WTC11 (cell line): ENCODE measurements at regions of chr1 and their contacts with region 1.

Region 1: DNA sequence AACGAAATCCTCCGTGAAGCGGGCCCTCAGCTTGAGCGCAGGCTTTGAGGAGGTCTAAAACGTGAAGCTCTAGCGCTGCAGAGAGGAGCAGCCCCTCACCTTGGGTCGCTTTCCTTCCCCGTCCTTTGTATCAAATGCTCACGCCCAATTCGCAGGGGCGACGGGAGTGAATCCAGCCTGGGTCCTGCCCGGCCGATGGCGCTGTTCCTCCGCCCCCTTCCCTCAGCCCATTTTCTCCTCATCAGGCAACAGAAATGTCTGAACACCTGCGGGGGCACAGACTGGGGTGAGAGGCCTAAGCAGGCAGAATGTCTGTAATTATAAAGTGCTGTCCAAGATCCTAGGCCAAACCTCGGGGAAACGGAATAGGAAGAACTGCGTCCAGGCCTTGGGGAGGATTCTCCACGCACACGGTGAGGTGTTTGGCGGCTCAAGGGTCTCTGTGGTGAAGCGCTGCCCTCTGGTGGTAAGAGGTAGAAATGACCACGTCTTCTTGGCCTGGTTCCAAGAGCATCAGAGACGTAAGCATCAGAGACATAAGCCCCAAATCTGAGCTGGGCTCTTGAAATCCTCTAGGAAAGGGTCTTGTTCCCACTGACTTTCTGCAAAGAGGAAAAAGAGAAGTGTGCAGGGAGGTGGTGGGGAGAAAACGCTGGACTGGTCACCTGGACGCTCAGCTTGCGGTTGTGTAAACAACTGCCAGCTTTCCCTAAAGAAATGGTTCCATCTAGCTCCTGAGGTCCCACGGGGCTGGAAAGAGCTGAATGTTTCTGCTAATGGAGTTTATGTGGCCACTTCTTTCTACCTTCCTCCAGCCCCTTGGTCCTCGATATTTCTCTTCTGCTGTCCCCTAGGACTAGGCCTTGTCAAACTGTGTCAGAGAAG is 92.1 kb upstream of the CD53 start:
- DNase-seq: peak; percentile 79
- ATAC-seq: peak; percentile 87
- H3K4me3 Mint-ChIP-seq: peak overlapping the region; percentile 74
- H3K27ac Mint-ChIP-seq: no peak overlapping the region
- H3K4me1 Mint-ChIP-seq: peaks cover 11% of the 10 kb centered on the region
- H3K27me3 Mint-ChIP-seq: peaks cover 39% of the 10 kb centered on the region
- CTCF ChIP-seq: peak; percentile 91

Region 2: DNA sequence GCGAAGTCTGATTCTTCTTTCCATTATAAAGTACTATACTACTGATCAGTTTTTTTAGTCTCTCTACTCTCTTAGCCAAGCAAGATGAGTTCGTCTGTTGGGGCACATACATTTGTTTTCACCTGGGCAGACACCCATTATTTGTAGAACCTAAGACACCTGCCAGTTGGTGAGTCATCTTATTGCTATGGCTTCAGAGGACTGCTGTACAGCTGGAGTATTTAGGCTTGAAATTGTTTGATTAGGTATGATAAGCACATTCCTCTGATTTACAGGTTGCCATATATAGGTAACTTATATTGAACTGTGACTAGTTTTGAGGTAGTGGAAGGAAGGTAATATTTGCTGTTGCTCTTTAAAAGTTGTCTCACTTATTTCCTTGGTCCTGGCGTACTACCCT is 424.4 kb before region 1 on chr1:
- CTCF ChIA-PET with region 1: no interaction called
- POLR2A ChIA-PET with region 1: no interaction called
- DNase-seq: no peak
- ATAC-seq: no peak
- H3K4me3 Mint-ChIP-seq: no peak overlapping the region
- H3K27ac Mint-ChIP-seq: no peak overlapping the region
- H3K4me1 Mint-ChIP-seq: no peaks in the 10 kb centered on the region
- H3K27me3 Mint-ChIP-seq: no peaks in the 10 kb centered on the region
- CTCF ChIP-seq: no peak

Region 3: GRCh38 chr1:110524311-110525251 is 256.3 kb before region 1 on chr1:
- CTCF ChIA-PET with region 1: interaction called, 66 read pairs
- POLR2A ChIA-PET with region 1: no interaction called
- DNase-seq: peak; percentile 81
- ATAC-seq: peak; percentile 96
- H3K4me3 Mint-ChIP-seq: no peak overlapping the region
- H3K27ac Mint-ChIP-seq: no peak overlapping the region
- H3K4me1 Mint-ChIP-seq: no peaks in the 10 kb centered on the region
- H3K27me3 Mint-ChIP-seq: peaks cover 4% of the 10 kb centered on the region
- CTCF ChIP-seq: peak; percentile 88

Region 4: DNA sequence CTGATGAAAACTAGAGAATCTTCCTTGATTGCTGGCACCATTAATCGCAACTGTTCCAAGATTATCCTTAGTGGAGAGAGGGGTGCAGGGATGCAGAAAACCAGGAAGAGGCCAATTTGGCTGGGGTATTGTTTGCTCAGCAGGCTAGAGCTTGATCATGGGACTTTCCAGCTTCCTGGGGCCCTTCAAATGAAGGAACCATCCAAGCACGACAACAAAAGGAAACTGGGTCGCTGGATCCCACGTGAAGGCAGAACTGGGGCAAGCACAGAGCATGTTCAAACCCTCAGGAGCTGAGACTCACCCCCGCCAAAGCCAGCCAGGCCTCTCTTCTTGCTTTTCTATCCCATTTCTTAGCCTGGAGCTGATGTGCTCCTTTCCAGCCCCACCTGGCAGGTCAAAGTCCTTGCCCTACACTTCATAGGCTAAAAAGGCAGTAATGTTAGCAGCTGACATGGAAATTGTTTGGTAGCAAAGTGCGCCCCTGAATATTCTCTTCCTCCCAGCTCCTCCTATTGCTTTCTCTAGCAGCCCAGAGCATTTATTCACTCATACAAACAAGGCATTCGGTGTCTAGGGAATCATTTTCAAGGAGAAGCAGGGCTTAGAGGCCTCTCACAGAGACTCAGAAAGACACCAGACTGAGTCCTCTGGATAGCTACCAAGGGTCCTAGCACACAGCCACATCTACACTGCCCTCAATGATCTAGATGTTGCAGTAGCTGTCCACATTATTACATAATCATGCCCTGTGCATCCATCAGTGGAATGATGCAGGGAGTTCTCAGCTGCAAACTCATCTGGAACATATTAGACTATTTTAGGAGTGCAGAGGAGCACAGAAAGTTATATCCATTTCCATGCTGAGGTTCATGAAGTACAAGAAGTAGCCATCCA is 186.1 kb before region 1 on chr1:
- CTCF ChIA-PET with region 1: no interaction called
- POLR2A ChIA-PET with region 1: no interaction called
- DNase-seq: no peak
- ATAC-seq: no peak
- H3K4me3 Mint-ChIP-seq: no peak overlapping the region
- H3K27ac Mint-ChIP-seq: no peak overlapping the region
- H3K4me1 Mint-ChIP-seq: no peaks in the 10 kb centered on the region
- H3K27me3 Mint-ChIP-seq: peaks cover 18% of the 10 kb centered on the region
- CTCF ChIP-seq: no peak

Region 5: DNA sequence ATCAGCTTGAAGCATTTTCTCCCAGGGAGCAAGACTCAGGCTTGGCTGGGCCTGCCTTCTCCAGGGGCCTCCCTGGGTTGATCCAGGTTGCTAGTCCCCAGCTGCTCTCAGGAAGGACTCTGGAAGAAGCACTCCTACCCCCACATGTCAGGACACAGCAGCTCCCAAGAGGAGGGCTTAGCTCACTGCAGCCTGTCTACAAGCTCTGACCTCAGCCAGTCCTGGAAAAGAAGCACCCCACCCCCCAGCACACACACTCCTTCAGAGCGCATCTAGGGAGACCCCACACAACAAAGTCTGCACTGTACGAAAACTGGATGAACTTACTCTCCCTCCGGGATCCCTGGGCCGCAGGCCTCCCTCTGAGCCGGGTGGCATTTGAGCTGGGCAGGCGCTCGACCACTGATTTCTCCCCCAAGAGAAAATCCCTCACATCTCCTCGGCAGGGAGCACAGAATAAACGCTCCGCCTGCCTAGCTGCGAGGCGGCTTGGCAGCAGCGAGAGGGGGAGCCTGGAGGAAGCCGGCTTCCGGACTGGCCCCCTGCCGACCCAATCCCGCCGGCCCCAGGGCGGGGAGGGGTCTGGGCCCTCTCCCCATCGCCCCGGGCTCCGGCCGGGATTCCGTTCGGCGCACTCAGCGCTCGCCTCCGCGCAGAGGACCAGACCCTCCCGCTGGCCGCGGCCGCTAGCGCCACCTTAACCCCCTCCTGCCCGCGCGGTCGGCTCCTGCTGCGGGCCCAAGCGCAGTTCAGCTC is 174.8 kb before region 1 on chr1 and contains the start of gene KCNA2:
- CTCF ChIA-PET with region 1: interaction called, 31 read pairs
- POLR2A ChIA-PET with region 1: no interaction called
- DNase-seq: peak; percentile 68
- ATAC-seq: peak; percentile 71
- H3K4me3 Mint-ChIP-seq: peak within 1 kb of the TSS; percentile 79
- H3K27ac Mint-ChIP-seq: no peak within 1 kb of the TSS
- H3K4me1 Mint-ChIP-seq: peaks cover 15% of the 10 kb centered on the region
- H3K27me3 Mint-ChIP-seq: peaks cover 79% of the 10 kb centered on the region
- CTCF ChIP-seq: no peak
- total RNA-seq, gene KCNA2: 0.41 to 0.87 TPM (median 0.50 TPM) in 3 replicates

Region 6: GRCh38 chr1:110630839-110631663 is 149.8 kb before region 1 on chr1:
- CTCF ChIA-PET with region 1: interaction called, 58 read pairs
- POLR2A ChIA-PET with region 1: no interaction called
- DNase-seq: peak; percentile 87
- ATAC-seq: peak; percentile 100
- H3K4me3 Mint-ChIP-seq: no peak overlapping the region
- H3K27ac Mint-ChIP-seq: no peak overlapping the region
- H3K4me1 Mint-ChIP-seq: no peaks in the 10 kb centered on the region
- H3K27me3 Mint-ChIP-seq: peaks cover 4% of the 10 kb centered on the region; the same call in 1 of the 2 replicates
- CTCF ChIP-seq: peak; percentile 82

Region 7: DNA sequence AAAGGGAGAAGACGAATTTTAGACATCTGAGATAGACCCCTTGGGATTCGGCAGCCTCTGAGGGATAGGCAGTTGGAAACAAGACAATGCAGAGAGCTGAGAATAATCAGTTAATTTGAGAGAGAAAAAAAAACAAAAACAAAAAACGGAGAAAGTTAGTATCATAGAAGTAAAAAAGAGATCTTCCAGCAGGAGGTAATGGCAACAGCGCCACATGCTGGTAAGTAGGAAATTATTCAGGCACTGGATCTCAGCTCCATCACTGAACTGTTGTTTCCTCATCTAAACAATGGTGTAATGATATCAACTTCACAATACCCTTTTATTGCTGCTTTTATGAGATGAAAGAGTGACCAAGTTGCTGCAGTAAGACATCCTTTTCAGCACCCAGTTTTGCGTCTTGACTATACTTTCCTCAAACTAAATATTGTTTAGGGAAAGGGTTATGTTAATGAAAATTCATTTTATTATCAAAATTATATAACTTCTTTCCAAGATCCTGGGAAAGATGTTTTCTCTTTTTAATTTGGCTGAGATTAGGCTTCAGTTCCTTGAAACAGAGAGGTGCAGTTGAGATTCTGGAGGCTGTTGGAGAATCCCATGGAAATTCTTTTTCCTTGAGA is 14.7 kb before region 1 on chr1:
- CTCF ChIA-PET with region 1: interaction called, 87 read pairs
- POLR2A ChIA-PET with region 1: no interaction called
- DNase-seq: no peak
- ATAC-seq: peak; percentile 26; the same call in 1 of the 2 replicates
- H3K4me3 Mint-ChIP-seq: peak overlapping the region; percentile 14; the same call in 1 of the 2 replicates
- H3K27ac Mint-ChIP-seq: no peak overlapping the region
- H3K4me1 Mint-ChIP-seq: peaks cover 3% of the 10 kb centered on the region; the same call in 1 of the 2 replicates
- H3K27me3 Mint-ChIP-seq: peaks cover 15% of the 10 kb centered on the region
- CTCF ChIP-seq: peak; percentile 73

Region 8: GRCh38 chr1:110903853-110904484 is 123.1 kb after region 1 on chr1:
- CTCF ChIA-PET with region 1: no interaction called
- POLR2A ChIA-PET with region 1: no interaction called
- DNase-seq: no peak
- ATAC-seq: no peak
- H3K4me3 Mint-ChIP-seq: no peak overlapping the region
- H3K27ac Mint-ChIP-seq: no peak overlapping the region
- H3K4me1 Mint-ChIP-seq: no peaks in the 10 kb centered on the region
- H3K27me3 Mint-ChIP-seq: no peaks in the 10 kb centered on the region
- CTCF ChIP-seq: no peak